CD4-positive, alpha-beta memory T cell (primary cell): ENCODE measurements at regions of chr2 and their contacts with region 1.

Region 1: DNA sequence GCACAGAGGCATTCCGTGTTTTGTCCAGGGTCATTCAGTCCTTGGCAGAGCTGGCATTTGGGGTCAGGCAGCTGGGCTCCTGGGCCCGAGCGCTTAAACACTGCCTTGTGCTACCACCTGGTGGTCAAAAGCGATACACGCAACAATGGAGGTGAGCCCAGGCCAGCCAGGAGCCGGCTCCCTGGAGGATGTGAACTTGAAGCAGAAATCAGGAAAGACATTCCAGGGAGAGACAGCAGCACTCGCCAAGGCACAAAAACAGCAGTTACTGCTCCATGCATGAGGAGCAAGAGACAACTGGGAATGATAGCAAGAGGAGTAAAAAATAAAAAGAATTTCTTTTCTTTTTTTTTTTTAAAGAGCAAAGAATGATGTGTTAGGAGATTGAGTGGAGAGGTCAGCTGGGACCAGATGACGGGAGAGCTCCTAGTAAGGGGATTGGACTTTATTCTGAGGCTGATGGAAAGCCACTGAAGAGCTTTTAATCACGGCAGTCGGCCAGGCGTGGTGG is 20.7 kb downstream of the SCYGR8 start:
- DNase-seq: peak in 4 of 5 donors; percentile 41 to 52 (median 46)
- H3K4me3 ChIP-seq: no peak overlapping the region
- H3K4me3 Mint-ChIP-seq: no peak overlapping the region
- H3K27ac ChIP-seq: no peak overlapping the region
- H3K27ac Mint-ChIP-seq: peak overlapping the region in 1 of 7 donors; percentile 66
- H3K4me1 ChIP-seq: no peaks in the 10 kb centered on the region
- H3K4me1 Mint-ChIP-seq: peaks cover 0 to 4% (median 2%) of the 10 kb centered on the region in 4 donors
- H3K27me3 ChIP-seq: no peaks in the 10 kb centered on the region
- H3K27me3 Mint-ChIP-seq: peaks cover 0 to 3% of the 10 kb centered on the region in 2 donors

Region 2: DNA sequence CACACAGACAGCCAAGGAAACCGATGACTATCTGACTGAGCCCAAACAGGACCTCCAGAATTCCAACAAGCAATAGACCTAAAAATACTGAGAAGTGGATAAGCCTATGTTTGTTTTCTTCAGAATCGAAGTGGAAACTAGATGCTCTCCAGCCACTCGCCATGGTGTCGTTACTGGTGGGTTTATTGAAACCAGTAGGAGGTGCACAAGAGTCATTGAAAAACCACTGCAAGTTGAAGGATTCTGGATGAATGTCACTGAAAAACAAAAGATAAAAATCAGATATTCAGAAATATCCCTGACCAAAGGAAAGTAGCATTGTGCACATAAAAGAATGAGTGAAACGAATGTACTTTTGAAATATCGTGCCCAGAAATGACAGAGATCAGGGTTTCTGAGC is 402.7 kb before region 1 on chr2:
- CTCF ChIA-PET with region 1: no interaction called
- POLR2A ChIA-PET with region 1: no interaction called
- intact Hi-C with region 1: loop called (anchors 5 kb)
- DNase-seq: peak in 1 of 5 donors; percentile 6
- H3K4me3 ChIP-seq: no peak overlapping the region
- H3K4me3 Mint-ChIP-seq: no peak overlapping the region
- H3K27ac ChIP-seq: no peak overlapping the region
- H3K27ac Mint-ChIP-seq: no peak overlapping the region
- H3K4me1 ChIP-seq: no peaks in the 10 kb centered on the region
- H3K4me1 Mint-ChIP-seq: no peaks in the 10 kb centered on the region
- H3K27me3 ChIP-seq: no peaks in the 10 kb centered on the region
- H3K27me3 Mint-ChIP-seq: no peaks in the 10 kb centered on the region

Region 3: DNA sequence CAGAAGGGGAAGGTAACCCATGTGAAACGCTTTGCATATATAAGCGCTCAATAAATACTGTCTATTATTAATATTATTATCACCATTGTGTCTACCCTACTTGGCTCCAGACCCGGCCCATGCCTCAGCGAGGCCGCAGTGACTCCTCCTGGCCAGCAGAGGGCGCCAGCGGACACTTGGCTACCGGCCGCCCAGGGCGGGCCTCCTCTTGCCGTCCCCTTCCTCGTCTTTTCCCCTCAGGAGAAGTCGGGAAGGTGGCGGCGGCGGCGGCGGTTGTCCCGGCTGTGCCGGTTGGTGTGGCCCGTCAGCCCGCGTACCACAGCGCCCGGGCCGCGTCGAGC is 294.5 kb before region 1 on chr2 and contains the start of gene AGFG1:
- CTCF ChIA-PET with region 1: interaction called, 9 read pairs
- POLR2A ChIA-PET with region 1: interaction called, 5 read pairs
- intact Hi-C with region 1: loop called (anchors 2 kb)
- DNase-seq: peak; percentile 79 to 86 (median 82)
- H3K4me3 ChIP-seq: peak within 1 kb of the TSS in 1 of 2 donors; percentile 65
- H3K4me3 Mint-ChIP-seq: peak within 1 kb of the TSS; percentile 88 to 97 (median 93)
- H3K27ac ChIP-seq: peak within 1 kb of the TSS; percentile 73
- H3K27ac Mint-ChIP-seq: peak within 1 kb of the TSS; percentile 83 to 97 (median 89)
- H3K4me1 ChIP-seq: peaks cover 51% of the 10 kb centered on the region
- H3K4me1 Mint-ChIP-seq: peaks cover 31 to 51% (median 43%) of the 10 kb centered on the region in 4 donors
- H3K27me3 ChIP-seq: no peaks in the 10 kb centered on the region
- H3K27me3 Mint-ChIP-seq: no peaks in the 10 kb centered on the region
- total RNA-seq, gene AGFG1: 56.5 to 62.4 TPM

Region 4: DNA sequence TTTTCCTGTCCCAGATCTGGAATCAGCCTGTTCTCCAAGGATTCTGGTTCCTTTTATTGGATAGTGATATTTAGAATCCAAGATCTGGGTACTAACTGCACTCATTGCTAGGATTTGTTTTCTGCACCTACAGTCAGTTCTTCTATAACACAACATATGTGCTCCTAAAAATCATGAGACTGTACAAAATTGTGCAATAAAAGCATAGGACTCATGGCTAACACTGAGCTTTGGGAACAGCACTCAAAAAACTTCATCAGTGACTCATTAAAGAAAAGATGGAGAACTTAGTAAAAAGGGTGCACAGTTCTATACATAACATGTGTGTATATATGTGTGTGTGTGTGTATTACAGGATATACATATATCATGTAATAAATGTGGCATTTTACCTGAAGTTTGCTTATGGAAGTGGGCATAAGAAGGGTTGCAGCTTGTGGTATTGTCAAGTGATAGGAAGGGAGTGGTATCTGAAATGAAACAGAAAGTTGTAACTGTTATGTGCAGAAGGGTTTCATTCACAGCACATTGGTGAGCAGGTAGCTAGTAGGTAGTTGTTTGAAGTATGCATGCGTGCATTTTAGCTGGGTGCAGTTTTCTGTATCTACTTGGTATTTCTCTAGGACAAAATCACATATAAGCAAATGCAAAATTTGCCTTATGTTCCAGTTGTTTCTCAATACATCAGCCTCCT is 173.6 kb before region 1 on chr2:
- CTCF ChIA-PET with region 1: no interaction called
- POLR2A ChIA-PET with region 1: no interaction called
- intact Hi-C with region 1: no loop called
- DNase-seq: no peak
- H3K4me3 ChIP-seq: no peak overlapping the region
- H3K4me3 Mint-ChIP-seq: no peak overlapping the region
- H3K27ac ChIP-seq: no peak overlapping the region
- H3K27ac Mint-ChIP-seq: no peak overlapping the region
- H3K4me1 ChIP-seq: no peaks in the 10 kb centered on the region
- H3K4me1 Mint-ChIP-seq: peaks cover 0 to 2% (median under 1%) of the 10 kb centered on the region in 4 donors
- H3K27me3 ChIP-seq: no peaks in the 10 kb centered on the region
- H3K27me3 Mint-ChIP-seq: peaks cover 23 to 28% of the 10 kb centered on the region in 2 donors

Region 5: DNA sequence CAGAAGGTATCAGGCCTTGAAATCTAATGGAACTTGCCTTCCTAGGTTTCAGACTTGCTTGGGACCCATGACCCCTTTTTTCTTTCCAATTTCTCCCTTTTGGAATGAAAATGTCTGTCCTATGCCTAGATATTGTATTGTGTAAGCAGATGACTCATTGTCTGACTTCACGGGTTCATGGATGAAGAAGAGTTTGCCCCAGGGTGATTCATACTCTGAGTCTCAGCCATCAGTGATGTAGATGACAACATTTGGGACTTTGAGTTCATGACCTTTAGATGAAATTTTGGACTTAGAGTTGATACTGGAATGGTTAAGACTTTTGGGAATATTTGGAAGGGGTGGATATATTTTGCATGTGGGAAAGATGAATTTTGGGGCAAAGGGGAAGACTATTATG is 111.0 kb before region 1 on chr2:
- CTCF ChIA-PET with region 1: interaction called, 37 read pairs
- POLR2A ChIA-PET with region 1: no interaction called
- intact Hi-C with region 1: loop called (anchors 1 kb)
- DNase-seq: no peak
- H3K4me3 ChIP-seq: no peak overlapping the region
- H3K4me3 Mint-ChIP-seq: no peak overlapping the region
- H3K27ac ChIP-seq: no peak overlapping the region
- H3K27ac Mint-ChIP-seq: no peak overlapping the region
- H3K4me1 ChIP-seq: no peaks in the 10 kb centered on the region
- H3K4me1 Mint-ChIP-seq: no peaks in the 10 kb centered on the region
- H3K27me3 ChIP-seq: no peaks in the 10 kb centered on the region
- H3K27me3 Mint-ChIP-seq: peaks cover 0 to 2% of the 10 kb centered on the region in 2 donors

Region 6: DNA sequence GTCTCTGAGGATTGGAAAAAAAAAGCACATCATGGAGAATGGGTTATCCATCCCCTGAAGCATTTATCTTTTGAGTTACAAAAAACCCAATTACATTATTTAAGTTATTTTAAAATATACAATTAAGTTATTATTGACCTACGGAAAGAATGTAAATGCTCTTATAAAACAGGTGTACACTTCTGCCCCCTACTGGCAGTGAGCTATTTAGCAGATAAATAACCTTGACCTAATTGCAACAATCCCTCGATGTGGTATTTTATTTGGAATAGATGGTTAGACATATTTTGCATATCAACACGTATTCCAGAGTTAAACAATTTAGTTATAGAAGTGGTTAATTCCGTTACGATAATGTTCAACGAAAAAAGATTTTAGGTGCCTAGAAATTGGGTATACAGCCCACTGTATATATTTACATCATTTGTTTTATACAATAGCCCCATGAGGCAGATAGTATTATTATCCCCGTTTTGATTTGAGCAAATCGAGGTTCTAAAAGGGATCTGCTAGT is 95.9 kb after region 1 on chr2:
- CTCF ChIA-PET with region 1: interaction called, 14 read pairs
- POLR2A ChIA-PET with region 1: no interaction called
- intact Hi-C with region 1: no loop called
- DNase-seq: peak in 4 of 5 donors; percentile 26 to 49 (median 37)
- H3K4me3 ChIP-seq: no peak overlapping the region
- H3K4me3 Mint-ChIP-seq: no peak overlapping the region
- H3K27ac ChIP-seq: no peak overlapping the region
- H3K27ac Mint-ChIP-seq: peak overlapping the region in 1 of 7 donors; percentile 31
- H3K4me1 ChIP-seq: peaks cover 3% of the 10 kb centered on the region
- H3K4me1 Mint-ChIP-seq: peaks cover 0 to 9% (median 4%) of the 10 kb centered on the region in 4 donors
- H3K27me3 ChIP-seq: no peaks in the 10 kb centered on the region
- H3K27me3 Mint-ChIP-seq: peaks cover 0 to 4% of the 10 kb centered on the region in 2 donors